Heart left ventricle (tissue), 16 donors: ENCODE measurements at regions of chr1 and their contacts with region 1.

Region 1: DNA sequence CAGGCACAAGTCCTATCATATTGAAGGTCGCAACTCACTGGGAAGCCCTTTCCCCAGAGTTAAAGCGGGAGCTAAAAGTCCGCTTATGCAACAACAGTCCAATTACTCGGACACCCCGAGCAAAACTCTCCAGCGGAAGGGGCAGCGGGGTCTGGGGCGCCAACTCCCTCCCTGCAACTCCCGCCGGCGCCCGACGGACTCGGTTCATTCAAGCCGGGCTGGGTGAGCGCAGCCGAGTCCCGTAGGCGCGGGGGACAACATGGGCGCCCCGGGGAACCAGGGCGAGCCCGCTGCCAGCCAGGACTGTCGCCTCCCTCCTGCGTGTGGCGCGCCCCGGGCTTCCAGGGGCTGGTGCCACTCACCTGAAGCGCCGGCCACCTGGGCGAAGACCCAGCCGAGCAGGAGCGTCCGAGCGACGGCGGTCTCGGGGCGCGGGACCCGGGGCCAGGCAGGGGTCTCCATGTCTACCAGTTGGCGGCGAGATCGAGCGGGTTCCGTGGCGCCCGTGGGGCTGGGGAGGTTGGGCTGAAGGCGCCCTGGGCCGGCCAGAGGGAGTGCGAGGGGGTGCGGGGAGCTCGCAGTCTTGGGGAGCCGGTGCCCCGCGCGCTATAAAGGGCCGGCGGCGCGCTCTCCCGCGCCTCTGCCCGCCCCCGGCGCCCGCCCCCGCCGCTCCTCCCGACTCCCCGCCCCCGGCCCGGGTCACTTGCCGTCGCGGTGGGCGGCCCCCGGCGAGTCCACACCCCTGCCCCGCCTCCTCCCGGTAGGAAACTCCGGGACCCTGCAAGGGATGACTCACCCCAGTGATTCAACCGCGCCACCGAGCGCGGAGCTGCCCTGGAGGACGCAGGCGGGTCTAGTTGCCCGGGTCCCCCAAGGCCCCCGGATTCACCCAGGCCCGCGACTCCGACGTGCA is at the start of gene F3:
- DNase-seq: peak; percentile 89 to 95 (median 93)
- ATAC-seq: peak; percentile 91 to 94 (median 94)
- H3K4me3 ChIP-seq: peak within 1 kb of the TSS; percentile 48 to 87 (median 74)
- H3K27ac ChIP-seq: peak within 1 kb of the TSS; percentile 80 to 95 (median 92)
- H3K4me1 ChIP-seq: peaks cover 0 to 39% (median 25%) of the 10 kb centered on the region in 12 donors
- H3K27me3 ChIP-seq: no peaks in the 10 kb centered on the region
- CTCF ChIP-seq: peak in 3 of 12 donors; percentile 10 to 25 (median 15)
- POLR2A ChIP-seq: peak; percentile 83 to 91
- total RNA-seq, gene F3: 28.6 to 88.8 (median 50.1) TPM

Region 2: GRCh38 chr1:93798301-93798700 is 743.1 kb before region 1 on chr1:
- intact Hi-C with region 1: no loop called
- DNase-seq: no peak
- ATAC-seq: peak in 2 of 4 donors; percentile 58
- H3K4me3 ChIP-seq: no peak overlapping the region
- H3K27ac ChIP-seq: peak overlapping the region in 4 of 12 donors; percentile 21 to 44 (median 28)
- H3K4me1 ChIP-seq: peaks cover 0 to 17% (median 6%) of the 10 kb centered on the region in 12 donors
- H3K27me3 ChIP-seq: no peaks in the 10 kb centered on the region
- CTCF ChIP-seq: no peak
- POLR2A ChIP-seq: no peak

Region 3: GRCh38 chr1:94396356-94397010 is 144.9 kb before region 1 on chr1:
- intact Hi-C with region 1: no loop called
- DNase-seq: no peak
- ATAC-seq: no peak
- H3K4me3 ChIP-seq: no peak overlapping the region
- H3K27ac ChIP-seq: no peak overlapping the region
- H3K4me1 ChIP-seq: peaks cover 0 to 3% (median 0%) of the 10 kb centered on the region in 12 donors
- H3K27me3 ChIP-seq: no peaks in the 10 kb centered on the region
- CTCF ChIP-seq: peak in 6 of 12 donors; percentile 6 to 27 (median 11)
- POLR2A ChIP-seq: no peak

Region 4: GRCh38 chr1:94463765-94464330 is 77.6 kb before region 1 on chr1:
- intact Hi-C with region 1: no loop called
- DNase-seq: no peak
- ATAC-seq: peak; percentile 69 to 83 (median 78)
- H3K4me3 ChIP-seq: no peak overlapping the region
- H3K27ac ChIP-seq: peak overlapping the region in 1 of 12 donors; percentile 58
- H3K4me1 ChIP-seq: peaks cover 0 to 12% (median 6%) of the 10 kb centered on the region in 12 donors
- H3K27me3 ChIP-seq: no peaks in the 10 kb centered on the region
- CTCF ChIP-seq: peak; percentile 16 to 70 (median 54)
- POLR2A ChIP-seq: no peak

Region 5: GRCh38 chr1:94589728-94590127 is 48.3 kb after region 1 on chr1:
- intact Hi-C with region 1: loop called in 2 of 10 experiments (anchors 5 to 10 kb)
- DNase-seq: no peak
- ATAC-seq: no peak
- H3K4me3 ChIP-seq: no peak overlapping the region
- H3K27ac ChIP-seq: peak overlapping the region in 2 of 12 donors; percentile 3 to 9
- H3K4me1 ChIP-seq: peaks cover 0 to 20% (median 3%) of the 10 kb centered on the region in 12 donors
- H3K27me3 ChIP-seq: no peaks in the 10 kb centered on the region
- CTCF ChIP-seq: no peak
- POLR2A ChIP-seq: no peak

Region 6: DNA sequence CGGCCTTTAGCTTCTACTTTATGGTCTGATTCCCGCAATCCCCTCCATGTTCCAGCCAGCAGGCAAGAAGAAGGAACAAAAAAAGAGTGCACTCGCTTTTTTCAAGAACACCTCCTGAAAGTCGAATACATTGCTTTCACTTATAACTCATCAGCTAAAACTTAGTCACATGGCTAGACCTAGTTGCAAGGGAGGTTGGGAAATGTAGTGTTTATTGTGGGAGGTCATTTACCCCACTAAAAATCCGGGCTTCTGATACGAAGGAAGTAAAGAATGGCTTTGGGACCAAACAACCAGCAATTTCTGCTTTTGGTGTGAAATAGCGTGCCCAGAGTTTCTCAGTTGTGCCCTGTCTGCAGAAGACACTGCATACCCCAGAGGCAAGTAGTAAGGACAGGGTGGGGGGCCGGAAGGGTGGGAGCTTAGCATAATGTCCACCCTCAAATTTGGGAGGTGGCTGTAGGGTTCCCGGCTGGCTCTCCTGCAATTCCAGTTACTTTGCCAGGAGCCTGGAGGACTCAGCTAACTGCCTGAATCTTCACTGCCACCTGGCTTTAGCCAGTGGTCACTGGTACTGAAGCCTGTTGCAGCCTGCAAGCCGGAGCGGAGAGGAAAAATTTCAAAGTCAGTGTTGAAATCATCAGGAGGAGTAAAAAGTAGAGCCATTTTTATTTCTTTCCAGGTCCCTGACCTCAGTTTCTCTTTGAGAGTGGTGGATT is 57.8 kb after region 1 on chr1:
- intact Hi-C with region 1: loop called in 3 of 10 experiments (anchors 5 to 10 kb)
- DNase-seq: peak in 3 of 5 donors; percentile 33 to 58 (median 52)
- ATAC-seq: peak; percentile 56 to 90 (median 90)
- H3K4me3 ChIP-seq: no peak overlapping the region
- H3K27ac ChIP-seq: no peak overlapping the region
- H3K4me1 ChIP-seq: peaks cover 0 to 24% (median 0%) of the 10 kb centered on the region in 12 donors
- H3K27me3 ChIP-seq: peaks cover 0 to 26% (median 0%) of the 10 kb centered on the region in 9 donors
- CTCF ChIP-seq: peak in 11 of 12 donors; percentile 41 to 66 (median 52)
- POLR2A ChIP-seq: no peak

Region 7: DNA sequence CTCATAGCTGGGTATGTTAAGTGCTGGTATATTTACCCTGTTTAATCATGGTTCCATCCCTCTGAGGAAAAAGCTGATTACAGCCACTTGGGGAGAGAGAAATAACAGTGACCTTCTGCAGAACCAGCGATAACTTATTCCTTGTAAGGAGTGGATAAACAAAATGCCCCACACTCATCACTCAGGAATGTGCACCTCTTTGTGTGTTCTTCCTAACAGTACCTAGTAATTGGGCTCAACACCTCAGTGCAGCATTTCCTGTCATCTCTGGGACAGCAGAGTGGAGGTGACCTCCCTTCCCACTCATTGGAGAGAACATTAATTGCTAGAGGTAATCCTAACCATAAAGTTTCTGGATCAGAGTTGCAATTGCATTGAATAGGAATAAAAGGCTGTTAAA is 112.6 kb after region 1 on chr1:
- intact Hi-C with region 1: loop called in 5 of 10 experiments (anchors 5 to 10 kb)
- DNase-seq: no peak
- ATAC-seq: peak in 3 of 4 donors; percentile 18 to 45 (median 43)
- H3K4me3 ChIP-seq: no peak overlapping the region
- H3K27ac ChIP-seq: peak overlapping the region in 8 of 12 donors; percentile 21 to 81 (median 62)
- H3K4me1 ChIP-seq: peaks cover 0 to 32% (median 11%) of the 10 kb centered on the region in 12 donors
- H3K27me3 ChIP-seq: no peaks in the 10 kb centered on the region
- CTCF ChIP-seq: no peak
- POLR2A ChIP-seq: no peak

Region 8: DNA sequence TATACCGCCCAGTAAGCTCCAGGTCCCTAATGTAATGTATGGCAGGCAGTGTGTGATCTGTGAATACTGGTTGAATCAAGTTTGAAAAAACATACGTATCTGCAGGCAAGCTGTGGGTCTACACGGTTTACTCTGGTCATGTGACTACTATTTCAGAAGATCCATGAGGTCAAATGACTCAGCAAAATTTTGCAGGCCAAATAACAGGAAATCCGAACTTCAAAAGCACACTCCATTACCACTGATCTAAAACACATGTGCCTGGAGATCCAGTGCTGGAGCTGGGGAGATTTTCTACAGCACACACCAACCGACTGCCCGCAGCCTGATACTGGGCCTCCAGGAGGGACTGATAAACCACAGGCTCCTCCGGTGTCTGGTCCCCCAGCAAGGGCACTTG is 214.2 kb after region 1 on chr1:
- intact Hi-C with region 1: loop called in 3 of 10 experiments (anchors 5 kb)
- DNase-seq: peak in 3 of 5 donors; percentile 20 to 37 (median 24)
- ATAC-seq: peak; percentile 25 to 46 (median 40)
- H3K4me3 ChIP-seq: no peak overlapping the region
- H3K27ac ChIP-seq: peak overlapping the region in 4 of 12 donors; percentile 9 to 69 (median 38)
- H3K4me1 ChIP-seq: peaks cover 7 to 53% (median 28%) of the 10 kb centered on the region in 12 donors
- H3K27me3 ChIP-seq: no peaks in the 10 kb centered on the region
- CTCF ChIP-seq: no peak
- POLR2A ChIP-seq: no peak